ENCODE measurements at regions of chr17 and their contacts with region 1.

Region 1: GRCh38 chr17:34443619-34444469 is 80.8 kb upstream of the CCL1 start:
- DNase-seq: no peak
- H3K4me3 ChIP-seq: no peak overlapping the region
- H3K27ac ChIP-seq: no peak overlapping the region
- H3K4me1 ChIP-seq: no peaks in the 10 kb centered on the region
- H3K27me3 ChIP-seq: peaks cover 3% of the 10 kb centered on the region
- CTCF ChIP-seq: peak in 1 of 2 donors; percentile 38

Region 2: DNA sequence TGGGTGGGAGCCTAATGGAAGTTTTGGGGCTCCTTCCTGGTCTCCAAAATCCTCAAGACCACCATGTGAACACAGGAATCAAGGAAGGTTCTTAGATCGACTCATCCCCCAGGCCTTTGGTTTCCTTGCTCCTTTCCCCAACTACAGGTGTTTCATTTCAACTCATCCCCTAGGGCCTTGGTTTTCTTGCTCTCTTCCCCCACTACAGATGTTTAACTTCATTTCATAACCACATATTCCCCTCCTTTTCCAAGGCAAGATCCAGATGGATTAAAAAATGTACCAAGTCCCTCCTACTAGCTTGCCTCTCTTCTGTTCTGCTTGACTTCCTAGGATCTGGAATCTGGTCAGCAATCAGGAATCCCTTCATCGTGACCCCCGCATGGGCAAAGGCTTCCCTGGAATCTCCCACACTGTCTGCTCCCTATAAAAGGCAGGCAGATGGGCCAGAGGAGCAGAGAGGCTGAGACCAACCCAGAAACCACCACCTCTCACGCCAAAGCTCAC is 158.5 kb before region 1 on chr17 and contains the start of gene CCL11:
- CTCF ChIA-PET with region 1: no interaction called
- dilution Hi-C with region 1: no loop called
- in situ Hi-C with region 1: no loop called
- intact Hi-C with region 1: no loop called
- DNase-seq: no peak
- H3K4me3 ChIP-seq: no peak within 1 kb of the TSS
- H3K27ac ChIP-seq: no peak within 1 kb of the TSS
- H3K4me1 ChIP-seq: no peaks in the 10 kb centered on the region
- H3K27me3 ChIP-seq: no peaks in the 10 kb centered on the region
- CTCF ChIP-seq: no peak
- total RNA-seq, gene CCL11: not detected

Region 3: DNA sequence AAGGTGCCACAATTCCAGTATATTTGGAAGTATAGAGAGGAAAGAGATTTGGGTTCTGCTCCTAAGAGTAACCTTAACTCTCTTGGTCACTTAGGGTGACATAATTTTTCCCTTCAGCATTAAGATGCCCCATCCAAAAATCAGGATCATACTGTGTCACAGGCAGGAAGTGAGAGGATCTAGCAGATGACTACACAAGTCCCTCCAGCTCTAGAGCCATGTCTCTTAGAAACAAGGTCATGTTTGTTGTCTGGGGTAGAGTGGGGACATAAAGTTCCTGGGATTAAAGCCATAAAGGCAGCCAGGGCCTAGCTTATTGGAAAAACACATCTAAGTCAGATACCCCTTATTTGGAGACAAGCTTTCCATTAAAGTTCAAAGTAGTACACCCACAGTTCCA is 121.9 kb before region 1 on chr17:
- CTCF ChIA-PET with region 1: no interaction called
- dilution Hi-C with region 1: no loop called
- in situ Hi-C with region 1: no loop called
- intact Hi-C with region 1: no loop called
- DNase-seq: no peak
- H3K4me3 ChIP-seq: no peak overlapping the region
- H3K27ac ChIP-seq: no peak overlapping the region
- H3K4me1 ChIP-seq: no peaks in the 10 kb centered on the region
- H3K27me3 ChIP-seq: no peaks in the 10 kb centered on the region
- CTCF ChIP-seq: no peak

Region 4: GRCh38 chr17:34902831-34903547 is 459.1 kb after region 1 on chr17:
- CTCF ChIA-PET with region 1: no interaction called
- dilution Hi-C with region 1: loop called (anchors 25 kb)
- in situ Hi-C with region 1: no loop called
- intact Hi-C with region 1: no loop called
- DNase-seq: no peak
- H3K4me3 ChIP-seq: no peak overlapping the region
- H3K27ac ChIP-seq: no peak overlapping the region
- H3K4me1 ChIP-seq: no peaks in the 10 kb centered on the region
- H3K27me3 ChIP-seq: peaks cover 3% of the 10 kb centered on the region
- CTCF ChIP-seq: no peak

Region 5: GRCh38 chr17:35141681-35142466 is 698.0 kb after region 1 on chr17 and contains the start of gene NLE1:
- CTCF ChIA-PET with region 1: no interaction called
- dilution Hi-C with region 1: loop called (anchors 25 kb)
- in situ Hi-C with region 1: no loop called
- intact Hi-C with region 1: no loop called
- DNase-seq: peak; percentile 72
- H3K4me3 ChIP-seq: peak within 1 kb of the TSS; percentile 68 to 98 (median 85)
- H3K27ac ChIP-seq: peak within 1 kb of the TSS; percentile 20
- H3K4me1 ChIP-seq: no peaks in the 10 kb centered on the region
- H3K27me3 ChIP-seq: no peaks in the 10 kb centered on the region
- CTCF ChIP-seq: peak; percentile 77 to 93
- total RNA-seq, gene NLE1: 22.2 to 27.4 TPM

Region 6: DNA sequence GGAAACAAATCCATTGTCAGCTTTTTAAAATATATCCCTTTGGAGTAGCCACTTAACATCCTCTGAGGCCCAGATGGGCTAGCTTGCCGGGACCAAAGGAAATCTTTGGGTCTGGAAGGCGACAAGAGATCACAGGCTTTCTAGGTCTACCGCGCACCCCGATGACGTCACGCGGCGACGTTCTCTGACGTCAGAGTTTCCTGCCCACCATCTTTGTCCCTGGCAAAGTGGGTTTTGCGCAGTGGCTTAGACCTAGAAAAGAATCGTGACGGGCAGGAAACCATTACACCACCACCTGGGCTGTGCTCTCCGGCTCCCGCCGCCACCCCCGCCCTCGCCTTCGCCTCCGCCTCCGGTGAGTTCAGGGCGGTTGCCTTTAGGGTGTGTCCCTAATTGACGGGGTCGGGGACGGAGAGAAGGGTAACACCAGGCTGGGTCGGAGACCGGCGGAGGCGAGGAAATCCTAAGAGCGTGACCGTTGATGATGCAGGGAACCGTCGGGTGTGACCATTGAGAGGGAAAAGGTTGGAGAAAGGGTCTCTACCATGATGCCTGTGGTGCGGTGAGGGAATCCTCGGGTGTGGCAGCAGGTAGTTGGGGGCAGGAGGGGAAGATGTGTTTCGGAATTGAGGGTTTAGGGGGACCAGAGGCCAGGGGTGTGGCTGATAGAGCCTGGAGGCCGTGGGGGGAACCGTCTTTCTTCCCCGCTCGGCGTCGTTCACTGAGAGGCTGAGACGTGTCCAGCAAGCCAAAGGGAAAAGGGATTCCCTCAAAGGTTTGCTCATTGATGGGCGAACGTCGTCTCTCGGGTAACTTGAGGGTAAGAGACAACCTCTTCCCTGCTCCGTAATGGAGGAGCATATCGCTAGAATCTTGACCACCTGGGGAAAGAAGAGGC is 1143.5 kb after region 1 on chr17 and contains the start of gene AP2B1:
- CTCF ChIA-PET with region 1: interaction called, 13 read pairs
- dilution Hi-C with region 1: no loop called
- in situ Hi-C with region 1: no loop called
- intact Hi-C with region 1: no loop called
- DNase-seq: peak; percentile 96
- H3K4me3 ChIP-seq: peak within 1 kb of the TSS; percentile 38 to 89 (median 84)
- H3K27ac ChIP-seq: peak within 1 kb of the TSS; percentile 89
- H3K4me1 ChIP-seq: peaks cover 7% of the 10 kb centered on the region
- H3K27me3 ChIP-seq: no peaks in the 10 kb centered on the region
- CTCF ChIP-seq: no peak
- total RNA-seq, gene AP2B1: 168 to 227 TPM